ENCODE measurements at regions of chr1 and their contacts with region 1.

Region 1: GRCh38 chr1:28581536-28582247 is 10.4 kb upstream of the RAB42 start:
- DNase-seq: peak; percentile 95
- H3K4me3 ChIP-seq: peak overlapping the region; percentile 73 to 96 (median 88)
- H3K27ac ChIP-seq: peak overlapping the region; percentile 87
- H3K4me1 ChIP-seq: peaks cover 23% of the 10 kb centered on the region
- H3K27me3 ChIP-seq: no peaks in the 10 kb centered on the region
- CTCF ChIP-seq: peak in 1 of 2 donors; percentile 2

Region 2: GRCh38 chr1:28552758-28553663 is 28.7 kb before region 1 on chr1 and contains the start of gene TRNAU1AP:
- CTCF ChIA-PET with region 1: no interaction called
- dilution Hi-C with region 1: no loop called
- in situ Hi-C with region 1: no loop called
- intact Hi-C with region 1: loop called (anchors 1 kb)
- DNase-seq: peak; percentile 96
- H3K4me3 ChIP-seq: peak within 1 kb of the TSS; percentile 77 to 88 (median 78)
- H3K27ac ChIP-seq: peak within 1 kb of the TSS; percentile 84
- H3K4me1 ChIP-seq: no peaks in the 10 kb centered on the region
- H3K27me3 ChIP-seq: no peaks in the 10 kb centered on the region
- CTCF ChIP-seq: no peak
- total RNA-seq, gene TRNAU1AP: 21.3 to 36.9 TPM

Region 3: GRCh38 chr1:28656335-28656734 is 74.6 kb after region 1 on chr1:
- CTCF ChIA-PET with region 1: no interaction called
- dilution Hi-C with region 1: no loop called
- in situ Hi-C with region 1: no loop called
- intact Hi-C with region 1: no loop called
- DNase-seq: no peak
- H3K4me3 ChIP-seq: no peak overlapping the region
- H3K27ac ChIP-seq: no peak overlapping the region
- H3K4me1 ChIP-seq: no peaks in the 10 kb centered on the region
- H3K27me3 ChIP-seq: no peaks in the 10 kb centered on the region
- CTCF ChIP-seq: no peak

Measured in mammary epithelial cell (primary cell).